ENCODE measurements at regions of chr10 and their contacts with region 1.

Region 1: GRCh38 chr10:102660888-102661657 is 16.8 kb downstream of the TRIM8 start:
- DNase-seq: peak; percentile 72
- ATAC-seq: peak; percentile 79
- H3K4me3 ChIP-seq: peak overlapping the region; percentile 11 to 63 (median 45); a peak in 5 of 6 replicates
- H3K27ac ChIP-seq: no peak overlapping the region
- H3K4me1 ChIP-seq: peaks cover 77% of the 10 kb centered on the region
- H3K27me3 ChIP-seq: no peaks in the 10 kb centered on the region
- CTCF ChIP-seq: peak; percentile 10; the same call in 1 of the 2 replicates
- EP300 ChIP-seq: peak; percentile 22 to 47; a peak in 2 of 4 replicates
- POLR2A ChIP-seq: 0 out of 4 replicates have a peak, but pooled peaks of 1 of the 2 experiments have one; percentile 11
- RAD21 ChIP-seq: no peak; the same call in 1 of the 2 replicates

Region 2: GRCh38 chr10:102678842-102679289 is 17.8 kb after region 1 on chr10:
- CTCF ChIA-PET with region 1: no interaction called
- POLR2A ChIA-PET with region 1: interaction called, 13 read pairs
- in situ Hi-C with region 1: no loop called
- intact Hi-C with region 1: no loop called
- DNase-seq: peak; percentile 76
- ATAC-seq: peak; percentile 93
- H3K4me3 ChIP-seq: peak overlapping the region in 2 of 3 experiments; percentile 19 to 62; a peak in 3 of 6 replicates
- H3K27ac ChIP-seq: no peak overlapping the region
- H3K4me1 ChIP-seq: peaks cover 56% of the 10 kb centered on the region
- H3K27me3 ChIP-seq: no peaks in the 10 kb centered on the region
- CTCF ChIP-seq: peak; percentile 96
- EP300 ChIP-seq: no peak
- POLR2A ChIP-seq: no peak
- RAD21 ChIP-seq: peak; percentile 91